ENCODE measurements at regions of chr6 and their contacts with region 1.

Region 1: GRCh38 chr6:109382576-109383437 is 540 bp upstream of the CD164 start:
- DNase-seq: peak; percentile 97
- ATAC-seq: peak; percentile 91
- H3K4me3 ChIP-seq: peak overlapping the region; percentile 73 to 88
- H3K27ac ChIP-seq: peak overlapping the region; percentile 98
- H3K4me1 ChIP-seq: peaks cover 33% of the 10 kb centered on the region
- H3K27me3 ChIP-seq: no peaks in the 10 kb centered on the region
- CTCF ChIP-seq: peak; percentile 86

Region 2: GRCh38 chr6:109009236-109009961 is 373.4 kb before region 1 on chr6:
- CTCF ChIA-PET with region 1: interaction called, 11 read pairs
- POLR2A ChIA-PET with region 1: no interaction called
- in situ Hi-C with region 1: no loop called
- intact Hi-C with region 1: loop called (anchors 5 kb)
- DNase-seq: peak; percentile 48
- ATAC-seq: peak; percentile 100
- H3K4me3 ChIP-seq: peak overlapping the region; percentile 71 to 92
- H3K27ac ChIP-seq: peak overlapping the region; percentile 83
- H3K4me1 ChIP-seq: peaks cover 15% of the 10 kb centered on the region
- H3K27me3 ChIP-seq: no peaks in the 10 kb centered on the region
- CTCF ChIP-seq: no peak

Region 3: GRCh38 chr6:109095027-109095834 is 287.6 kb before region 1 on chr6 and contains the start of gene CEP57L1:
- CTCF ChIA-PET with region 1: interaction called, 5 read pairs
- POLR2A ChIA-PET with region 1: no interaction called
- in situ Hi-C with region 1: no loop called
- intact Hi-C with region 1: loop called (anchors 2 kb)
- DNase-seq: peak; percentile 98
- ATAC-seq: peak; percentile 85
- H3K4me3 ChIP-seq: peak within 1 kb of the TSS; percentile 64 to 89
- H3K27ac ChIP-seq: peak within 1 kb of the TSS; percentile 96
- H3K4me1 ChIP-seq: peaks cover 18% of the 10 kb centered on the region
- H3K27me3 ChIP-seq: no peaks in the 10 kb centered on the region
- CTCF ChIP-seq: no peak; the same call in 1 of the 2 replicates
- total RNA-seq, gene CEP57L1: 37.6 TPM

Region 4: DNA sequence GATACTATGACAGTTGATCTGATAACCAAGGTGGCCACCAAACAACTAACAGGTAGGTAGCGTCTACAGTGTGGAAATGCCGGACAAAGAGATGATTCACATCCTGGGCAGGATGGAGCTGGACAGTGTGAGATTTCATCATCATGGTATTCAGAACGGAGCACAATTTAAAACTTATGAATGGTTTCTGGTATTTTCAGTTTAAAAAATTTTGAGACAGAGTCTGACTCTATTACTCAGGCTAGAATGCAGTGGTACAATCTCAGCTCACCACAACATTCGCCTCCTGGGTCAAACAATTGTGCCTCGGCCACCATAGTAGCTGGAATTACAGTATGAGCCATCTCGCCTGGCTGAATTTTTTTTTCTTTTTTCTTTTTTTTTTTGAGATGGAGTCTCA is 243.7 kb before region 1 on chr6:
- CTCF ChIA-PET with region 1: no interaction called
- POLR2A ChIA-PET with region 1: no interaction called
- in situ Hi-C with region 1: no loop called
- intact Hi-C with region 1: no loop called
- DNase-seq: no peak
- ATAC-seq: 0 out of 2 replicates have a peak, but pooled peaks have one; percentile 51
- H3K4me3 ChIP-seq: no peak overlapping the region
- H3K27ac ChIP-seq: no peak overlapping the region
- H3K4me1 ChIP-seq: no peaks in the 10 kb centered on the region
- H3K27me3 ChIP-seq: no peaks in the 10 kb centered on the region
- CTCF ChIP-seq: no peak

Region 5: DNA sequence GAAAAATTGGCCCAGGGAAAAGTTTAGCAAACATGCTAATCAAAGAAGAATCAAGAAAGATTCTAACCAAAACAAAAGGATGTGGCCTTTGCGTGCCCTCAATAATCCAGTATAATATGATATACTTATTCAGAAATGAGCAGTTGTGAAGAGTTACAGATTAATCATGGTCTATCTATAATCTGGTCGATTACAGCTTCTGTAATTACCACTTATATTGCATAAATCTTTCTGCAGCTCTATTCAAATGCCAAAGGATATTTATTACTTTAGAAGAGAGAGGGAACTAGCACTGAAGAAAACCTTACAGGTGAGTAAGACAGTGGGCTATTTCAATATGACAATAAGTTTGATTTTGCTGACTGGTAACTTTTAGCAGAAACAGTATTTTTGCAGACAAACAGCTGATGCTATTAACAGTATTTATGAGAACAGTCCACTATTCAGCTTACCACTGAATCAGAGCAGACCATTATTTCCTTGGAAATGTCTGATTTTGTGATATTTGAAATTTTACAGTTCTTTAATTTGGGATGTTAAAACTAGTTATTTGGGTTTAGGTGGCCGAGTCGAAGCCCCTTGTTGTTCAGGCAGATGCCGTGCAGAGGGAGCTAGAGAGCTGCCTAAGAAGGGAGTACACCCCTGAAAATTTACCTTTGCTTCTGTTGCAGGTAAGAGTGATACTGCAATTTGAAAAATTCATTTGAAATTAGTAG is 195.2 kb before region 1 on chr6:
- CTCF ChIA-PET with region 1: interaction called, 20 read pairs
- POLR2A ChIA-PET with region 1: interaction called, 3 read pairs
- in situ Hi-C with region 1: no loop called
- intact Hi-C with region 1: loop called (anchors 1 kb)
- DNase-seq: peak; percentile 58
- ATAC-seq: peak; percentile 84
- H3K4me3 ChIP-seq: no peak overlapping the region
- H3K27ac ChIP-seq: no peak overlapping the region
- H3K4me1 ChIP-seq: peaks cover 3% of the 10 kb centered on the region; the same call in 1 of the 2 replicates
- H3K27me3 ChIP-seq: peaks cover 43% of the 10 kb centered on the region
- CTCF ChIP-seq: peak; percentile 98

Region 6: DNA sequence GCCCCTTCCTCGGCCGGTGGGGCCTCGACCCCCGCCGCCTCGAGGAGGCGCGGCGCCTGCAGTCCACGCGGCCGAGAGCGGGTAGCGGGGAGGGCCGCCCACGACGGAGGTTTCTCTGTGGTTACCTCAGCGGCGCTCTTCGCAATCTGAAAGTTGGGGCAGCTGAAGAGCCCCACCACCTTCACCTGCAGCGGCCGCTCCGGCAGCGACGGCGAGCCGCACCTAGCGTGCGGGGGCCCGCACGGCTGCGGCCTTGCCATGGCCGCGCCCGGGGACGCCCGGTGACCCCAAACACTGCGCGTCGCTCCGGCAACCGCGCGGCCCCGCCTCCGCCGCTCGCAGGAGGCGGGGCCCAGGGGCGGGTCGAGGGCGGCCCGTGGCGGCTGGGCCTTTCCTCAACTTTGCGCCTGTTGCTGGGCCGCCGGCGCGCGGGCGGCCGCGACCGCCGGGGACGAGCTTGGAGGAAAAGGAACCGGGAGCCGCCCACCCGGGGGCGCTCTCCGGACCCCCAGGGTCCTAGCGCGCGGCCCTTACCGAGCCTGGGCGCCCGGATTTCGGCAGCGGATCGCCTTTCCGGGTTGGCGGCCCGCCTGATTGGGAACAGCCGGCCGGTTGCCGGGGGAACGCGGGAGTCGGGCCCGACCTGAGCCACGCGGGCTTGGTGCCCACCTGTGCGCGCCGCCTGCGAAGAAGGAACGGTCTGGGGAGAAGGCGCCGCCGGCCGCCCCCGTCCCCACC is 57.7 kb after region 1 on chr6 and contains the starts of genes PPIL6 and SMPD2:
- CTCF ChIA-PET with region 1: interaction called, 4 read pairs
- POLR2A ChIA-PET with region 1: interaction called, 4 read pairs
- in situ Hi-C with region 1: no loop called
- intact Hi-C with region 1: loop called (anchors 5 kb)
- DNase-seq: no peak
- ATAC-seq: peak; percentile 93
- H3K4me3 ChIP-seq: peak within 1 kb of the TSS; percentile 74 to 77
- H3K27ac ChIP-seq: peak within 1 kb of the TSS; percentile 83
- H3K4me1 ChIP-seq: peaks cover 14% of the 10 kb centered on the region
- H3K27me3 ChIP-seq: no peaks in the 10 kb centered on the region
- CTCF ChIP-seq: no peak
- total RNA-seq, gene PPIL6: 2.2 TPM
- total RNA-seq, gene SMPD2: 50.0 TPM

Measured in Panc1 (cell line).